WTC11 (cell line): ENCODE measurements at regions of chr19 and their contacts with region 1.

Region 1: GRCh38 chr19:35673121-35673804 is 6.9 kb downstream of the UPK1A start:
- DNase-seq: peak; percentile 69
- ATAC-seq: peak; percentile 92
- H3K4me3 Mint-ChIP-seq: peak overlapping the region; percentile 84
- H3K27ac Mint-ChIP-seq: peak overlapping the region; percentile 96
- H3K4me1 Mint-ChIP-seq: peaks cover 12% of the 10 kb centered on the region; the same call in 1 of the 2 replicates
- H3K27me3 Mint-ChIP-seq: peaks cover 48% of the 10 kb centered on the region
- CTCF ChIP-seq: no peak

Region 2: DNA sequence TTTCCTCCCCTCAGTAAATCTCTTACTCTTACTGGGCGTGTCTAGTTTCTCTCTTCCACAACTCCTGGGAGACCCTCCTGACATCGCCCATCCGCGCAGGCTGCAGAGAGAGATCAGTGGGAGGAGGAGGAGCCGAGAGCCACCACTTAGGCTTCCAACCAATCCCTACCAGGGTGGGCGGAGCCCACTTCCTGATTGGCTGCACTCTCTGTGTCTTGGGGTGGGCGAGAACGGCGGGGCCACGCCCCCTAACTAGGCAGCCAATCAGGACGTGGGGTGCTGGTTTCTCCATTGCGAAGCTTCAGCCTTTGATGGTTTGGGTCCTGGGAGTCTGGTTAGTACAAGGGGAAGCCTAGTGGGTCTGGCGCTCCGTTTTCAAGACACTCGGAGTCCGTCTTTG is 87.4 kb before region 1 on chr19 and contains the start of gene PMIS2:
- CTCF ChIA-PET with region 1: no interaction called
- POLR2A ChIA-PET with region 1: no interaction called
- DNase-seq: peak; percentile 75
- ATAC-seq: peak; percentile 88
- H3K4me3 Mint-ChIP-seq: no peak within 1 kb of the TSS
- H3K27ac Mint-ChIP-seq: no peak within 1 kb of the TSS
- H3K4me1 Mint-ChIP-seq: no peaks in the 10 kb centered on the region
- H3K27me3 Mint-ChIP-seq: peaks cover 50% of the 10 kb centered on the region
- CTCF ChIP-seq: no peak
- total RNA-seq, gene PMIS2: not detected in 3 replicates

Region 3: GRCh38 chr19:35693830-35694599 is 20.8 kb after region 1 on chr19:
- CTCF ChIA-PET with region 1: interaction called, 16 read pairs
- POLR2A ChIA-PET with region 1: no interaction called
- DNase-seq: peak; percentile 93
- ATAC-seq: peak; percentile 96
- H3K4me3 Mint-ChIP-seq: no peak overlapping the region
- H3K27ac Mint-ChIP-seq: no peak overlapping the region
- H3K4me1 Mint-ChIP-seq: no peaks in the 10 kb centered on the region; the same call in 1 of the 2 replicates
- H3K27me3 Mint-ChIP-seq: peaks cover 6% of the 10 kb centered on the region
- CTCF ChIP-seq: peak; percentile 94